ENCODE measurements at regions of chr20 and their contacts with region 1.

Region 1: GRCh38 chr20:38962044-38962927 is at the start of gene DHX35:
- DNase-seq: peak; percentile 99
- ATAC-seq: peak; percentile 100
- H3K4me3 Mint-ChIP-seq: peak within 1 kb of the TSS; percentile 92
- H3K27ac Mint-ChIP-seq: peak within 1 kb of the TSS; percentile 96
- H3K4me1 Mint-ChIP-seq: peaks cover 28% of the 10 kb centered on the region
- H3K27me3 Mint-ChIP-seq: no peaks in the 10 kb centered on the region
- total RNA-seq, gene DHX35: 10.8 to 11.1 TPM

Region 2: GRCh38 chr20:38926142-38926933 is 35.9 kb before region 1 on chr20 and contains the start of gene FAM83D:
- CTCF ChIA-PET with region 1: interaction called, 26 read pairs
- POLR2A ChIA-PET with region 1: interaction called, 25 read pairs
- DNase-seq: peak; percentile 98
- ATAC-seq: peak; percentile 95
- H3K4me3 Mint-ChIP-seq: peak within 1 kb of the TSS; percentile 91
- H3K27ac Mint-ChIP-seq: peak within 1 kb of the TSS; percentile 84
- H3K4me1 Mint-ChIP-seq: peaks cover 38% of the 10 kb centered on the region
- H3K27me3 Mint-ChIP-seq: no peaks in the 10 kb centered on the region
- total RNA-seq, gene FAM83D: 24.9 to 25.6 TPM

Region 3: DNA sequence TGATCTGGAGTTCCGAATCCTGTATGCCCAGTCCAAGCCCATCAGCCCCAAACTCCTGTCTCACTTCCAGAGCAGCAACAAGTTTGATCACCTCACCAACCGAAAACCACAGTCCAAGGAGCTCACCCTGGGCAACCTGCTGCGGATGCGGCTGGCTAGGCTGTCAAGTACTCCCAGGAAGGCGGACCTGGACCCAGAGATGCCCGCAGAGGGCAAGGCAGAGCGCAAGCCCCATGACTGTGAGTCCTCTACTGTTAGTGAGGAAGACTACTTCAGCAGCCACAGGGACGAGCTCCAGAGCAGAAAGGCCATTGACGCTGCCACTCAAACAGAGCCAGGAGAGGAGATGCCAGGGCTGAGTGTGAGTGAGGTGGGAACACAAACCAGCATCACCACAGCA is 10.7 kb before region 1 on chr20:
- CTCF ChIA-PET with region 1: interaction called, 11 read pairs
- POLR2A ChIA-PET with region 1: interaction called, 7 read pairs
- DNase-seq: no peak
- ATAC-seq: no peak
- H3K4me3 Mint-ChIP-seq: no peak overlapping the region
- H3K27ac Mint-ChIP-seq: no peak overlapping the region
- H3K4me1 Mint-ChIP-seq: no peaks in the 10 kb centered on the region
- H3K27me3 Mint-ChIP-seq: no peaks in the 10 kb centered on the region

Region 4: DNA sequence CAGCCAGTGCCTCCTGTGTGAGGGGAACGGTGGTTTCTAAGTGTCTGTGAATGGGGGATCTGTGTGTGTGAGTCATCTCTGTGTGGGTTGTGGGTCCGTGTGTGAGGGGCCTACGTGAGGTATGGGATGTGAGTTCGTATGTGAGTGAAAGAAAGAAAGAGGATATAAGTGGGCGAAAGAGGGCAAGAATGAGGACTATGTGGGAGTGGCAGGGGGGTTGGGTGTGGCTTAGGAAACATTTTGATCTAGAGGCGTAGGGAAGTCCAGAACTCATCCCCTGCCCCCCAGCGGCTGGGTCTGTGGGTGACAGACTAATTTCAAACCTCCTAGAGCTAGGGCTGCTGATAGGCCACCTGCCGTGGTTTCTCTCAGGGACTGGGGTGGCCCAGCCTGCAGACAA is 35.3 kb after region 1 on chr20:
- CTCF ChIA-PET with region 1: interaction called, 18 read pairs
- POLR2A ChIA-PET with region 1: interaction called, 7 read pairs
- DNase-seq: peak; percentile 75
- ATAC-seq: peak; percentile 87
- H3K4me3 Mint-ChIP-seq: peak overlapping the region; percentile 28
- H3K27ac Mint-ChIP-seq: peak overlapping the region; percentile 67
- H3K4me1 Mint-ChIP-seq: peaks cover 26% of the 10 kb centered on the region
- H3K27me3 Mint-ChIP-seq: no peaks in the 10 kb centered on the region

Region 5: GRCh38 chr20:39152126-39152525 is 189.8 kb after region 1 on chr20:
- CTCF ChIA-PET with region 1: no interaction called
- POLR2A ChIA-PET with region 1: no interaction called
- DNase-seq: no peak
- ATAC-seq: no peak
- H3K4me3 Mint-ChIP-seq: no peak overlapping the region
- H3K27ac Mint-ChIP-seq: no peak overlapping the region
- H3K4me1 Mint-ChIP-seq: no peaks in the 10 kb centered on the region
- H3K27me3 Mint-ChIP-seq: peaks cover 13% of the 10 kb centered on the region